PC-9 (cell line): ENCODE measurements at regions of chr5 and their contacts with region 1.

Region 1: DNA sequence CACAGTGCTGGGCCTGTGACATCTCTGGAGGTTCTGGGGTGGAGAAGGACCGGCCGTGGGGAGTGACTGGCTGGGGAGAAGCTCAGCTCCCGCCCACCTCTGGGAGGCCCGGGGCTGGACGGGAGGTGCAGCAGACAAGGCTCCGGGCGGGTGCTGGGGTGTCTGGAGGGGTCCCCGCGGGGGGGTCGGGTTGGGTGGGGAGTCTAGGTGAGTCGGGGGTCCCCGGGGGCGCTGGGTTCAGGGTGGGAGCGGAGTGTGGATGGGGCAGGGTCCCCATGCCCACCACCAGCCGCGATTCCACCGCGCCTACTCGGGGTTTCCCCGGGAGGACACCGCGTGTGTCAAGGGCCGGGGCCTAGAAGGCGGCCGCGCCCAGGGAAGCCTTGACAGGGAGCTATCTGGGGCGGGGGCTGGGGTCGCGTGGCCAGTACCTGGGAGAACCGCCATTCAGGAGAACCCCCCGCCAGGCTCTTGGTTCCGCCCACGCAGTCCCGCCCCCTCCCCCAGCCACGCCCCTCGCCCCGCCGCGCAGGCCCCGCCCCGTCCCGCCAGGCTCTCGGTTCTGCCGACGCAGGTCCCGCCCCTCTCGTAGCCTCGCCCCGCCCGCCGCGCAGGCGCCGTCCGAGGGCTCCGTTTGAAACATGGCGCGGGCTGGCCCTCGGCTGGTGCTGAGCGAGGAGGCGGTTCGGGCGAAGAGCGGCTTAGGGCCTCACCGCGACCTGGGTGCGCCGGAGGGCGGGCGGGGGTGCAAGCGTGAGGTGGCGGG is at the start of gene CEP72:
- DNase-seq: peak; percentile 82 to 98
- H3K4me3 ChIP-seq: peak within 1 kb of the TSS; percentile 98
- H3K27ac ChIP-seq: peak within 1 kb of the TSS; percentile 81
- H3K4me1 ChIP-seq: peaks cover 25% of the 10 kb centered on the region
- H3K27me3 ChIP-seq: 0 out of 2 replicates have a peak, but pooled peaks cover 6% of the 10 kb centered on the region
- CTCF ChIP-seq: no peak
- total RNA-seq, gene CEP72: 83.3 and 86.8 TPM in 2 replicates

Region 2: DNA sequence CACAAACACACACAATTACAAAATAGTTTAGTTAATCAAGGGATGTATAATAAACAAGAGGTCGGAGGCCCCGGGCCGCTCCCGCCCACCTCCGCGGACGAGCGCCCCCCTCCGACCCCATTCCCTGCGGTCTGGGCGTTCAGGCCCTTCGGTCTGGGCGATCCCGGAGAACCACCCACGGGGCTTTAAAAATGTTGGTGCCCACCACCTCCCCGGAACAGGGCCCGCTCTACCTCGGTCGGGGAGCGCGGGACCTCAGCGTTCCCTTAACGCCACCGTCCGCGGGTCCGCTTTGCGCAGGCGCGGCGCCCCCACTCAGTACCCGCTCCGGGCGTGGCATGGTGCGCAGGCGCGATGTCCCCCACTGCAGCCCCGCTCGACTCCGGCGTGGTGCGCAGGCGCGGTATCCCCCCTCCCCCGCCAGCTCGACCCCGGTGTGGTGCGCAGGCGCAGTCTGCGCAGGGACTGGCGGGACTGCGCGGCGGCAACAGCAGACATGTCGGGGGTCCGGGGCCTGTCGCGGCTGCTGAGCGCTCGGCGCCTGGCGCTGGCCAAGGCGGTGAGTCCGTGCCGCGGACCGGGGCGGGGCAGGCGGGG is 393.9 kb before region 1 on chr5 and contains the starts of genes CCDC127 and SDHA:
- CTCF ChIA-PET with region 1: interaction called, 4 read pairs
- POLR2A ChIA-PET with region 1: interaction called, 35 read pairs
- intact Hi-C with region 1: loop called (anchors 2 kb)
- DNase-seq: peak; percentile 86 to 100
- H3K4me3 ChIP-seq: peak within 1 kb of the TSS; percentile 79
- H3K27ac ChIP-seq: no peak within 1 kb of the TSS
- H3K4me1 ChIP-seq: peaks cover 21% of the 10 kb centered on the region
- H3K27me3 ChIP-seq: no peaks in the 10 kb centered on the region
- CTCF ChIP-seq: peak; percentile 67
- total RNA-seq, gene CCDC127: 24.1 and 31.1 TPM in 2 replicates
- total RNA-seq, gene SDHA: 347 and 443 TPM in 2 replicates

Region 3: GRCh38 chr5:442335-443238 is 169.3 kb before region 1 on chr5 and contains the start of gene EXOC3:
- CTCF ChIA-PET with region 1: interaction called, 11 read pairs
- POLR2A ChIA-PET with region 1: interaction called, 3 read pairs
- intact Hi-C with region 1: no loop called
- DNase-seq: peak; percentile 71 to 92
- H3K4me3 ChIP-seq: peak within 1 kb of the TSS; percentile 99
- H3K27ac ChIP-seq: peak within 1 kb of the TSS; percentile 25
- H3K4me1 ChIP-seq: peaks cover 24% of the 10 kb centered on the region
- H3K27me3 ChIP-seq: no peaks in the 10 kb centered on the region
- CTCF ChIP-seq: no peak
- total RNA-seq, gene EXOC3: 155 and 188 TPM in 2 replicates

Region 4: DNA sequence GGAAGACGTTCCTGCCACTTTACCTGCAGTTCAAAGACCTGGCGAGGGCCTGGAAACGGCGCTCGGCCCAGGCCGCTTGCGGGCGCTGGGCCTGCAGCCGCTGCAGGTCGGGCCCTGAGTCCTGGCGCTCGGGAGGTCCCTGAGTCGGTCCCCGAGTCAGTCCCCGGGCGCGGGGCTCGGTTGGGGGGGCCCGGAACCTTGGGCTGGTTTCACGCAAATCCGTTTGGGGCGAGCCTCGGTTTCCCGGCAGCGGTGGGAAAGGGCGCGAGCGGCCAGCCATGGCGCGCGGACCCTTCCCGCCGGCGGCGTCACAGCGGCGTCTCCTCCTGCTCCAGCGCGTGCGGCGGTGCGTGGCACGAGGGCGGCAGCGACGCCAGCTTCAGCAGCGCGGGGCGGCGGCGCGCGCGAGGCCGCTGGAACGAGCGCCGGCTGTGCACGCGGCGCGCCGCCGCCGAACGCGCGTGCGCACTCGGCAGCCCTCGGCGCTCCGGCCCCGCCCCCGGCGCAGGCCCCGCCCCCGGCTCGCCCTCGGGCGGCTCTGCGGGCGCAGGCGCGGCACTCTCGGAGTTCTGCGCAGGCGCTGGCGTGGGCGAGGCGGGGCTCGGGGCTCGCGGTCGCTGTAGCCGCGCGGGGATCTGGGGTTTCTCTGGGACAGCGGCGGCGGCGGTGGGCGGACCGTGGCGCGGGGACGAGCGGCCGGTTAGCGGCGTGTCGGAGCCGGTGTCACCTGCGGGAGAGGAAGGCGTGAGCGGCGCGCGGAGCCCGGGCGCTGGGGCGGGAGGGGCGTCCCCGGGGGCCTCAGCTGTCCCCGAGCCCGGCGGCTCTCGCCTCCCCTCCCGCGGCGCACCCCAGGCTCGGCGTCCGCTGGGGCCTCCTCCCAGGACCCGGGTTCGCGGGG is 139.0 kb before region 1 on chr5:
- CTCF ChIA-PET with region 1: interaction called, 3 read pairs
- POLR2A ChIA-PET with region 1: no interaction called
- intact Hi-C with region 1: loop called (anchors 2 kb)
- DNase-seq: peak; percentile 65 to 99
- H3K4me3 ChIP-seq: peak overlapping the region; percentile 67
- H3K27ac ChIP-seq: peak overlapping the region; percentile 59
- H3K4me1 ChIP-seq: peaks cover 19% of the 10 kb centered on the region
- H3K27me3 ChIP-seq: no peaks in the 10 kb centered on the region
- CTCF ChIP-seq: no peak

Region 5: DNA sequence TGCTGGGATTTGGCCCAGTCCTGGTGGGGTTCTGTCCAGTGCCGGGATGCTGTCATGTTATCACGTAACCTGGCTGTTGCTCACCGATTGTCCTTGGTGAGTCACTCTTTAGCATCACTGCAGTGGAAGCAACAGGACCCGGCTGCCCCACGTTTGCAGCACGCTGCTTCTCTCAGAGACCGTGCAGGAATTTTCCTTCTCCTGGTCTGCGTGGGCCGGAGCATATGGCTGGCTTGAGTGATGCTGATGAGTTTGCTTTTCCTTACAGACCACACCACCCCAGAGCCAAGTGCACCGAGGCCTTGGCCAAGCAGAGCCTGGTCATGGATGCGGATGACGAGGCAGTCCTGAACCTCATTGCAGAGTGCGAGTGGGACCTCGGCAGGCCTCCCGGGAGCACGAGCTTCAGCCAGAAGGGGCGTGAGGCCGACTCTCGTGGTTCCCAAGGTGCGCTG is 21.6 kb after region 1 on chr5:
- CTCF ChIA-PET with region 1: no interaction called
- POLR2A ChIA-PET with region 1: no interaction called
- intact Hi-C with region 1: no loop called
- DNase-seq: peak in 1 of 2 experiments; percentile 46
- H3K4me3 ChIP-seq: no peak overlapping the region
- H3K27ac ChIP-seq: no peak overlapping the region
- H3K4me1 ChIP-seq: no peaks in the 10 kb centered on the region
- H3K27me3 ChIP-seq: no peaks in the 10 kb centered on the region
- CTCF ChIP-seq: no peak

Region 6: GRCh38 chr5:657570-657969 is 45.7 kb after region 1 on chr5:
- CTCF ChIA-PET with region 1: interaction called, 10 read pairs
- POLR2A ChIA-PET with region 1: no interaction called
- intact Hi-C with region 1: no loop called
- DNase-seq: peak in 1 of 2 experiments; percentile 75
- H3K4me3 ChIP-seq: no peak overlapping the region
- H3K27ac ChIP-seq: no peak overlapping the region
- H3K4me1 ChIP-seq: no peaks in the 10 kb centered on the region
- H3K27me3 ChIP-seq: no peaks in the 10 kb centered on the region
- CTCF ChIP-seq: no peak

Region 7: GRCh38 chr5:1011226-1011631 is 399.3 kb after region 1 on chr5:
- CTCF ChIA-PET with region 1: interaction called, 18 read pairs
- POLR2A ChIA-PET with region 1: no interaction called
- intact Hi-C with region 1: no loop called
- DNase-seq: peak in 1 of 2 experiments; percentile 87
- H3K4me3 ChIP-seq: no peak overlapping the region
- H3K27ac ChIP-seq: no peak overlapping the region
- H3K4me1 ChIP-seq: no peaks in the 10 kb centered on the region
- H3K27me3 ChIP-seq: peaks cover 87% of the 10 kb centered on the region
- CTCF ChIP-seq: peak; percentile 88